ENCODE measurements at regions of chr17 and their contacts with region 1.

Region 1: DNA sequence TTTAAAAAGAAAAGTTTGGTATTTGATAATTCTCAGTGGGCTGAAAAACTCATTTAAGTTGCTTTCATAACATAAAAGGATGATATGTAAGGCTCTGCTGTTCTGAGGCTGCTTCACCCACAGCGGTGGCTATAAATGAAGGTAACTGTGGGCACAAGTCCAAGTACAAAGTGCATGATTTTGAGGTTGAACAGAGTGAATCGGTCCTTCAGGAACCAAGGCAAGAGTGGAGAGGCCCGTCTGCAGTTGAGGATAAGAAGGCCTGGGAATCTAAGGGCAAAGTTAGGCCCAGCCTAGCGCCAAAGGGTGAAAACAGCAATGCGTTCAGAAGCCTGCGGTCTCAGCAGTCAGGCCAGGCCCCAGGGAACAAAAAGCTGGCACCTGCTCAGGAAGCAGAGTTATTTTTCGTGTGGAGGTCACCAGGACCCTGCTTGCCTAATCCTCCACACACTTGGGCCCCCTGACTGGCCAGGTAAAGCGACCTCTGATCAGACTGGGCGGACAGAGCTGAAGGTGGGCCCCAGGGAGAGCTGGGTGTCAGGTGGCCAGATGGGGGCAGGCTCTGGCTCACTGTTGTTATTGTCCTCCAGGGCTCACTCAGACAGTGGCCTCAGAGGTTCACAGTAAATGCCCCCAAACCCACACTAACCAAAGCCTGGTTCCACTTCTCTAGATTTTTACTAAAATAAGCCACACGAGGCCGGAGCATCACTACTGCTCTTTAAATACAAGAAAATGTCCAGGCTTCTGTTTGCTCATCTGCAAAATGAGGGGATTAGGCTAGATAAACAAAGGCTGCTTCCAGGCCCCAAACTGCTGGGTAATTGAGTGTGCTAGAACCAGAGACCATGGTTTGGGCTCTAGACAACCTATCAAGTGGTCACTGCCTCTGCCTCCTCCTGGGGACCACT is 46.5 kb downstream of the TEX2 start:
- DNase-seq: peak in 1 of 2 donors; percentile 56
- ATAC-seq: peak; percentile 63
- H3K4me3 ChIP-seq: no peak overlapping the region
- H3K27ac ChIP-seq: peak overlapping the region; percentile 50 to 97
- H3K4me1 ChIP-seq: peaks cover 6 to 8% of the 10 kb centered on the region in 2 donors
- H3K27me3 ChIP-seq: no peaks in the 10 kb centered on the region

Region 2: DNA sequence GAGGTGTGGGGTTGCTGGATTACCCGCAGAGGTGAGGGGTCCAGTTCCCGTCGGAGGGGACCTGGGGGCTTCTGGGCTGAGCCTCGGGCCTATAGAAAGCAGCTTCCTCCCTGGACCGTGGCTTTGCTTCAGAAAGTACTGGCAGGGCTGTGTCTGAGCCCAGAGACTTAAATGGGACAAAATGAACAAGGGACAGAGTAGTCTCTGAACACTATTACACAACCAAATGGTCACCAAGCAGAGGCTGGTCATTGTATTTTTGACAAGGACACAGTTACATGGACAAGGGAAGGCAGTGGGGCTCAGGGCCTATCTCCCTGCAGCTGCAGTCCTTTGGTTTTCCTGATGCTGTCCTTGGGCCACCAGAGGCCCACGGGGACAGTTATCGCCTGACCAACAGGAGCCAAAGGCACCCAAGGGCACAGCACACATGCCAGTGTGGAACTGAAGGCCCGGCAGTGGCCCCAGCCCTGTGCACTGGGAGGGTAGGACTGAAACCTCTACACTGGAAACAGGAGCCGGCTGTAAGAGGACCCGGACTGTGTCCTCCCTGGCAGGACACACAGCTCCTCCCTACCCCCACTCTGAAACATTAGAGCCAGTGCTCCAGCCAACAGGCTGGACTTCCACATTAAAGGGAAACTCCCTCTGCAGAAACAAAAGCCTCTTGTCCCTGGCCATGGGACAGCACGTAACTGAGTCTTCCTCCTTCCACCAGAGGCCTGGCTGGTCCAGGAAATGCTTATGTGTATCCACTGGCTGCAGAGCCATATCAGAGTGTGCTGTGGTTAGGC is 60.6 kb before region 1 on chr17:
- intact Hi-C with region 1: loop called in 1 of 2 experiments (anchors 10 kb)
- DNase-seq: peak in 1 of 2 donors; percentile 75
- ATAC-seq: peak; percentile 67
- H3K4me3 ChIP-seq: no peak overlapping the region
- H3K27ac ChIP-seq: no peak overlapping the region
- H3K4me1 ChIP-seq: peaks cover 2 to 9% of the 10 kb centered on the region in 2 donors
- H3K27me3 ChIP-seq: no peaks in the 10 kb centered on the region

Region 3: GRCh38 chr17:64281962-64282727 is 65.6 kb after region 1 on chr17:
- intact Hi-C with region 1: no loop called
- DNase-seq: peak in 1 of 2 donors; percentile 61
- ATAC-seq: peak; percentile 68
- H3K4me3 ChIP-seq: no peak overlapping the region
- H3K27ac ChIP-seq: no peak overlapping the region
- H3K4me1 ChIP-seq: no peaks in the 10 kb centered on the region
- H3K27me3 ChIP-seq: no peaks in the 10 kb centered on the region